ENCODE measurements at regions of chr4 and their contacts with region 1.

Region 1: DNA sequence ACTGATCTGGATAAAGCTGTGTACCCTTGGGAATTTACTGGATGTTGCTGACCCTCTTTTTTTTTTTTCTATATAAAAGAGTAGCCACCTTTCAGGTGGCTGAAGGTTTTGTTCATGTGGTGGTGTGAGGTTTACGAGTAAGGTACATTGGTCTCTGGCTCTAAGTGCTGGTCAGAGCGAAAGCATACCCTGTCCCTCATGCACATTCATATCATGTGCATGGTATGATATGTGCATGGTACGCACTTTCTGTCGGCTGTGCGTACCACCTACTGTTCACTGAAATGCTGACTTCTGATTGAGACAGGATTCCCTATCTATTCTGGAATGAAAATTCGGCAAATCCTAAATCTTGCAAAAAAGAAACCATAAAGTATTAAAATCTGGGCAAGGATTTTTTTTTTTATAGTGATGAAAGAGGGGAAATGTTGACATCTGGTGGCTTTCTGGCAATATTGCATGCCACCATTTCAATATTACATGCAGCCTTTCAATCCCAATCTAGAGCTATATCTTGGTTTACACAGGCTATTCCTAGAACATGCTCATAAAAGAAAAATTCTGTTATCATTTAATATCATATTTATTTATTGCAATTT is 32.8 kb downstream of the FAM149A start:
- DNase-seq: no peak
- H3K4me3 Mint-ChIP-seq: no peak overlapping the region
- H3K27ac Mint-ChIP-seq: no peak overlapping the region
- H3K4me1 Mint-ChIP-seq: peaks cover 4% of the 10 kb centered on the region
- H3K27me3 Mint-ChIP-seq: peaks cover 11% of the 10 kb centered on the region

Region 2: DNA sequence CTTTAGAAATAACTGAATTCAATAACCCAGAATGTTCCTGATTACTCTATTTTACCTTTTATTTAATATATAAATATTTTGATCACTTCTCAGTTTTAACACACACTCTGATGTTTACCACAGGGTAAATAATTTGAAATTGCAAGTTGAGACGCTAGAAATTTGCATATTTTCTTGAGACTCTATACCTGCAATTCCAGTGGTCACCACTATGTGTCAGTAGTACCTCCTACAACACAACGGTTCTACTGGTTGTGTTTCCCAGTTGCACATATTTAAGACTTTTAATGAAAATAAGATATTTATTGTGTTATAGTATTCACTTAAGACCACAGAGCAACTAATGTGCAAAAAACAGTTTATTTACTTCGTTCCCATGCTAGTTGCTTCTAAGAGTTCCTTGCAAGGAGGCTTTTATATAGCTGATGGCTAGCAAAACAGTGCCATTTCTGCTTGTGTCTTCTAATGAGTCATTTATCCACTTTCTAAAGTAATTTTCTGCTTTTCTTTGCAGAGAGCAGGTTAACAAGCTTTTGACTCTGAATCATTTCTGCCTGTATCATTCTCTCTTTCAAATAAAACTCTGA is 503.1 kb before region 1 on chr4:
- CTCF ChIA-PET with region 1: no interaction called
- POLR2A ChIA-PET with region 1: no interaction called
- intact Hi-C with region 1: loop called (anchors 10 kb)
- DNase-seq: no peak
- H3K4me3 Mint-ChIP-seq: no peak overlapping the region
- H3K27ac Mint-ChIP-seq: no peak overlapping the region
- H3K4me1 Mint-ChIP-seq: peaks cover 3% of the 10 kb centered on the region
- H3K27me3 Mint-ChIP-seq: peaks cover 26% of the 10 kb centered on the region

Region 3: DNA sequence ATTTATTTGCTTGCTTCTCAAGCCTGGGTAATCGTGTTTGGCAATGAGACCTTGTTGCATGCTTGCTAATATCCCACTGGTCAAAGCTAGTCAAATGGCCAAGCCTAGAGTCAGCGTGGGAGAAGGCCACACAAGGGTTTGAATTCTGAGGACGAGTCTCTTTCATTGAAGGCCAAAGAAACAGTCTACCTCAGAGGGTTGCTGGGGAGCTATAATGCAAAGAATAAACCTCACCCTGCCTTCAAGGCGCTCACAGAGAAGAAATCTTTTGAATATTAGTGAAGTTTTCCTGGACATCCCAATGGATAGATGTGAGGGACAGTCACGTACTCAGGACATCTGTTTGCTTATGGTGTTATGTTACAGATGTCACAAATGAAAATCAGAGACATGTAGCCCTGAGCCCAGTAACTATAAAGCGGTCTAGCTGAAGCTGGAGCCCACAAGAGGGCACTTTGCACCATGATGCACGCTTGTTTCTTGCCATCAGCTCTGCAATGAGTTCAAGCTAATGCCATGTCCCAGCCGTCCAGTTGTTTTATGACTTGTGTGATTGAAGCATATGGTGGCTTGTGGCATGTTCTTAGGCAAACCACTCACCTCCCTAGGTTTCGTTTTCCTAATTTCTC is 69.4 kb before region 1 on chr4:
- CTCF ChIA-PET with region 1: interaction called, 16 read pairs
- POLR2A ChIA-PET with region 1: no interaction called
- intact Hi-C with region 1: loop called (anchors 1 kb)
- DNase-seq: peak; percentile 58
- H3K4me3 Mint-ChIP-seq: no peak overlapping the region
- H3K27ac Mint-ChIP-seq: no peak overlapping the region
- H3K4me1 Mint-ChIP-seq: peaks cover 15% of the 10 kb centered on the region
- H3K27me3 Mint-ChIP-seq: peaks cover 6% of the 10 kb centered on the region

Region 4: GRCh38 chr4:186118582-186118981 is 18.7 kb before region 1 on chr4:
- CTCF ChIA-PET with region 1: no interaction called
- POLR2A ChIA-PET with region 1: no interaction called
- intact Hi-C with region 1: no loop called
- DNase-seq: no peak
- H3K4me3 Mint-ChIP-seq: no peak overlapping the region
- H3K27ac Mint-ChIP-seq: no peak overlapping the region
- H3K4me1 Mint-ChIP-seq: no peaks in the 10 kb centered on the region
- H3K27me3 Mint-ChIP-seq: peaks cover 17% of the 10 kb centered on the region